Cardiac septum (tissue), 1 donor: ENCODE measurements at regions of chr19 and their contacts with region 1.

Region 1: DNA sequence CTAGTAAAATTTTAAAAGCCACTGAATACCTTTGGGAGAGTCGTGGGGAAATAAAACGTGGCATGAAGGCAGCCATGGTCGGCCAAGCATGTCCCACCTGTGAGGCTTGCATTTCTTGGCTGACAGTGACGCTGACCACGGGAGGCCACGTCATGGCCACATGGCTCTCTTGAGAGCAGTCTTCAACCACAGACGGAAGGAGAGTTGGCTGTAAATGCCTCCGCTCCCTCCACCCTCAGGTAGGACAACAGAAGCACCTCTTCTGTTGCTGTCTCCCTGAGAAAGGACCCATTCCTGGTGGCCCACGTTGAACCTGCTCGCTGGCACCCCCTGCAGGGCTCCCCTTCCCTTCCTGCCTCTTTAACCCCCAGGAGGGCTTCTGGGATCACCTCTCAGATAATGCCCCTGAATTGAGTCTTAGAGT is 10.6 kb upstream of the LRRC25 start:
- DNase-seq: no peak

Region 2: DNA sequence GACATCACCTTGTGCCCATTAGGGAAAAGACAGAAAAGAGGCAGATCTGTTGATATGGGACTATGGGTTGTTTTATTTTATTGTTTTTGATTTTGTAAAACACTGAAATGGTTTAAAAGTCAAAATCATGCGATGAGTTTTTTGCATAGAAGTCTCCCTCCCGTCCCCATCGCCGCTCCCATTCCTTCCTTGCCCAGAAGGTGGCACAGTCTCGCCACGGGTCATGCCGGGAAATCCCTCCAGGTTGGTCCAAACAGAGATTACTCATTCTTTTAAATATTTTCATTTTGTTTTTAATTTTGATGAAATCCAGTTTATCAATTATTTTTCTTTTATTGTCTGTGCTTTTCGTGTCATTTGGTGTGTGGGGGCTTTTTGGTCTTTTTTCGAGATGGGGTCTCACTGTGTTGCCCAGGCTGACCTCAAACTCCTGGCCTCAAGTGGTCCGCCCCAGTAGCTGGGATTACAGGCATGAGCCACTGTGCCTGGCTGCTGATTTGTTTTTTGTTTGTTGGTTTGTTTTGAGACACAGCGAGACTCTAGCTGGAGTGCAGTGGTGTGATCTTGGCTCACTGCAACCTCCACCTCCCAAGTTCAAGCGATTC is 58.4 kb before region 1 on chr19:
- intact Hi-C with region 1: loop called (anchors 1 kb)
- DNase-seq: no peak

Region 3: DNA sequence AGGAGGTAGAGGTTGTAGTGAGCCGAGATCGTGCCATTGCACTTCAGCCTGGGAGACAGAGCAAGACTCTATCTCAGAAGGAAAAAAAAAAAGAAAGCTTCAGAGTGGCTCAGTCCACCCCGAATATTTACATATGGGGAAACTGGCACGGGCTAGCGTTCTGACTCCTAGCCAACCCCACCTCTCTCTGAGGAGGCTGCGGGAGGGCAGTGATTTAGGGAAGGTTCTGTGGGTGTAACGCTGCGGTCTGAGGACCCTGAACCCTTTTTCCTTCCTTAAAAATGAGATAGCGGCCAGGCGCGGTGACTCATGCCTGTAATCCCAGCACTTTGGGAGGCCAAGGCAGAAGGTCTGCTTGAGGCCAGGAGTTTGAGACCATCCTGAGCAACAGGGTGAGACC is 15.6 kb before region 1 on chr19:
- intact Hi-C with region 1: loop called (anchors 2 kb)
- DNase-seq: peak; percentile 88